Ascending aorta (tissue), 2 donors: ENCODE measurements at regions of chr19 and their contacts with region 1.

Region 1: DNA sequence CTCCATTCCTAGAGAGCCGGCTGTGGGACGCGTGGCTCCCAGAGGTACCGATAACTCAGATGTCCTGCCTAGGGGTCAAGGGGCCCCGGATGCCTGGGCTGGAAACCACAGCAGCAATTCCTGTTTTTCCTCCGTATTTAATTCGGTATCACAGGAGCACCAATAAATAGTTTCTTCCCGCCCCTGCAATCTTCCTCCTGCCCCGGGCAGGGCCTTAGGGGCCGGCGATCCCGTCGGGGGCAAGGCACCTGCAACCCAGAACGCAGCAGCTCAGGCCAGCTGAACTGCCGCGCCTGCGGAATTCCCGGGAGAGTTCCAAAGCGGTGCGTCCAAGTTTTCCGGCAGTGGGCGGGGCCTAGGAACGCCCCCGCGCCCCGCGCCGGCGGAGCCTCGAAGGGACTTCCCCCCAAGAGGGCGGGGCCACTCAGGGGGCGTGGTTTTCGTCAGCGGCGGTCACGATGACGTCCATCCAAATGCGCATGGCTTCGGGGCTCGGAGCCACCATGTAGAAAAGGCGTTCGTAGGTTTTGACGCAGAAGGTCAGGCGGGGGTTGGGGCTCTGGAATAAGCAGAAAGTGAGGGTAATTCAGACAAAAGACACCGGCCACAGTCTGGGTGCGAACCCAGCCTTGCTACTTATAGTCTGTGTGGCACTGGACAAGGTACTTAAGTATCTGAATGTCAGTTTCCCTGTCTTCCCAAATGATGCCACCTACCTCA is 9.7 kb upstream of the LYPD3 start:
- DNase-seq: peak; percentile 75 to 96
- H3K4me3 ChIP-seq: peak overlapping the region; percentile 46 to 60
- H3K27ac ChIP-seq: peak overlapping the region; percentile 68 to 76
- H3K4me1 ChIP-seq: peaks cover 0 to 7% of the 10 kb centered on the region in 2 donors
- H3K27me3 ChIP-seq: no peaks in the 10 kb centered on the region
- CTCF ChIP-seq: no peak

Region 2: DNA sequence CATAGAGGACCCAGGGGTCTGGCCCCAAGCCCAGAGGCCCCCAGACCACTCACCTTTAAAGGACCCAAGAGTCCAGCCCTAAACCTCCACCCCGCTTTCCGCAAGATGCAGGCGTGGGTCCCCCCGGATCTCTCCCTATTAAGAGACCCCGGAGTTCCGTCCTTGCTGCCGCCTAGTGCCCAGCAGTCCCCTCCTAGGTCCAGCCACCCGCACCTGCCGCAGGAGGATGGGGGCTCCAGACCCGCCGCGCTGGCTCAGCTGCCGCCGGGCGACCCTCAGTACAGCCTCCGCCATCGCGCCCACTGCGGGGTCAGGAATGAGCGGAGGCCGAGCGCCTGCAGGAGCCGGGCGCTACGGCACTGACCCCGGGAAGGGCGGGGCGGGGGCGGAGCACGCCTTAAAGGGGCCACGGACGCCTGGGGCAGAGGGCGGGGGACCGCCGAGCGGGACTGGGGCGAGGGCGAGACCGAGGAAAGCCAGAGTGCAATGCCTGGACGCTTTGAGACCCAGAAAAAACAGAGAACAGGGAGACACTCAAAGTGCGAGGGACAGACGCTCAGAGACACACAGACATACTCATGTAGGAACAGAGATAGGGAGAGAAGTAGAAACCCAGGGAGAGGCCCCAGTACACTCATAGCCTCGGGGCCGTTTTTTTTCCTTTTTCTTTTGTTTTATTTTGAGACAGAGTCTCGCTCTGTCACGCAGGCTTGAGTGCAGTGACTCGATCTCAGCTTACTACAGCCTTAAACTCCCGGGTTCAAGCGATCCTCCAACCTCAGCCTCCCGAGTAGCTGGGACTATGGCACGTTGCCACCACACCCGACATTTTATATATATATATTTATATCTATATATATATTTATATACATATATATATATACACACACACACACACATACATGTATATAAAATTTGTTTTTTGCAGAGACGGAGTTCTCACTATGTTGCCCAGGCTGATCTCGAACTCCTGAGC is 52.0 kb after region 1 on chr19 and contains the start of gene ETHE1:
- intact Hi-C with region 1: loop called (anchors 2 kb)
- DNase-seq: peak; percentile 40 to 92
- H3K4me3 ChIP-seq: peak within 1 kb of the TSS; percentile 76 to 91
- H3K27ac ChIP-seq: peak within 1 kb of the TSS; percentile 82 to 87
- H3K4me1 ChIP-seq: peaks cover 12 to 22% of the 10 kb centered on the region in 2 donors
- H3K27me3 ChIP-seq: no peaks in the 10 kb centered on the region
- CTCF ChIP-seq: no peak
- total RNA-seq, gene ETHE1: 118 TPM

Region 3: DNA sequence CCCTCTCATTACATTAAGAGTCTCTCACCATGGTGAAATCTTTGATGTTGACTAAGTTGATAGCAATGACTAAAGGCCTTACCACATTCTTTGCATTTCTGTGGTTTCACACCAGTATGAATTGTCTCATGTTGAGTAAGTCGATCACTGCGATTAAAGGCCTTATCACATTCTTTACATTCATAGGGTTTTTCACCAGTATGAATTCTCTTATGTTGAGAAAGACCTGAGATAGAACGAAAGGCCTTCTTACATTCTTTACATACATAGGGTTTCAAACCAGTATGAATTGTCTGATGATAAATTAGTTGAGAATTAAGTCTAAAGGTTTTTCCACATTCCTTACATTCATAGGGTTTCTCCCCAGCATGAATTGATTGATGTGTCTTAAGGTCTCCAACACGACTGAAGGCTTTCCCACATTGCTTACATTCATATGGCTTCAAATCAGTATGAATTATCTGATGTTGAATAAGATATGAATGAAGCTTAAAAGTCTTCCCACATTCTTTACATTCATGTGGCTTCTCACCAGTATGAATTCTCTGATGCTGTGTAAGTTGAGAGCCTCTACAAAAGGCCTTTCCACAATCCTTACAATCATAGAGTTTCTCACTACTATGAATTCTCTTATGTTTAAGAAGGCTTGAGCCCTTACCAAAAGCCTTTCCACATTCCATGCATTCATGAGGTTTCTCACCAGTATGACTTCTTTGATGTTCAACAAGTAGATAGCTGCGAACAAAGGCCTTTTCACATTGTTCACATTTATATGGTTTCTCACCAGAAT is 397.6 kb after region 1 on chr19:
- intact Hi-C with region 1: no loop called
- DNase-seq: no peak
- H3K4me3 ChIP-seq: no peak overlapping the region
- H3K27ac ChIP-seq: no peak overlapping the region
- H3K4me1 ChIP-seq: no peaks in the 10 kb centered on the region
- H3K27me3 ChIP-seq: no peaks in the 10 kb centered on the region
- CTCF ChIP-seq: no peak